PC-9 (cell line): ENCODE measurements at regions of chr1 and their contacts with region 1.

Region 1: DNA sequence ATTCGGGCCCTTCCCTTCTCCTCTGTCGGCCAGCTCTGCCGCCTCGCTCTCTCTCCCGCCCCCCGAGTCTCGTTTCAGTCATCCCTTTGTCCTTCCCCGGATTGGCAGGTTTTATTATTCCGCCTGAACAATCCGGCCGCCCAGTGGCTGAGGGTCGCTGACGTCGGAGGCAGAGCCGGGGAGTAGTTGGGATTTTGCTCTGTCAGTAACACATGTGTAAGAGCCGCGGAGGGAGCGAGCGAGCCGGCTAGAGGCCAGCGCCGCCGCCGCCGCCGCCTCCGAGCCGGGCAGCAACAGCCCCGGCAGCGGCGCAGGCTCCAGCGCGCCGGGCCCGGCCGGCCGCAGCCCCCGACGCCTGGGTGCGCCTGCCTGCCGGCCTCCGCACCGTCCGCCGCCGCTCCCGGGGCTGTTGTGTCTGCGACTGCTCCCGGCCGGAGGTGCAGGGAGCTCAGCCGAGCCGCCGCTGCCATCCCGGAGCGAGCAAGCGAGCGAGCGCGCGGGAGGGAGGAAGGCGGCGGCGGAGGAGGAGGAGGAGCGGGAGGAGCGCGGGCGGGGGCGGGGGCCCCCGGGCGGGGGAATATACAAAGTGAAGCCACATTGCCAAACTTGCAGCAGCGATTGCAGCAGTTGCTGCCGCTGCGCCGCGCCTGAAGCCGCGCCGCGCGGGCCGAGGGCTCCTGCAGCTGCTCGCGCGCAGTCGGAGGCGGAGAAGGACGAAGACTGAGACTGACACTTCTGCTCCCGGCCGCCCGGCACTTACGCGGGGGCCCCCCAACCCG is at the start of gene LMO4:
- DNase-seq: peak; percentile 93 to 94
- H3K4me3 ChIP-seq: peak within 1 kb of the TSS; percentile 96
- H3K27ac ChIP-seq: peak within 1 kb of the TSS; percentile 96
- H3K4me1 ChIP-seq: peaks cover 27% of the 10 kb centered on the region
- H3K27me3 ChIP-seq: no peaks in the 10 kb centered on the region
- CTCF ChIP-seq: no peak
- total RNA-seq, gene LMO4: 37.1 and 47.7 TPM in 2 replicates

Region 2: GRCh38 chr1:87017998-87018672 is 310.3 kb before region 1 on chr1:
- CTCF ChIA-PET with region 1: no interaction called
- POLR2A ChIA-PET with region 1: no interaction called
- intact Hi-C with region 1: no loop called
- DNase-seq: no peak
- H3K4me3 ChIP-seq: no peak overlapping the region
- H3K27ac ChIP-seq: no peak overlapping the region
- H3K4me1 ChIP-seq: no peaks in the 10 kb centered on the region
- H3K27me3 ChIP-seq: no peaks in the 10 kb centered on the region
- CTCF ChIP-seq: no peak

Region 3: GRCh38 chr1:87131809-87132283 is 196.6 kb before region 1 on chr1:
- CTCF ChIA-PET with region 1: no interaction called
- POLR2A ChIA-PET with region 1: no interaction called
- intact Hi-C with region 1: loop called (anchors 2 kb)
- DNase-seq: peak; percentile 55 to 69
- H3K4me3 ChIP-seq: peak overlapping the region; percentile 46; the same call in 1 of the 2 replicates
- H3K27ac ChIP-seq: no peak overlapping the region
- H3K4me1 ChIP-seq: 0 out of 2 replicates have a peak, but pooled peaks cover 12% of the 10 kb centered on the region
- H3K27me3 ChIP-seq: no peaks in the 10 kb centered on the region
- CTCF ChIP-seq: peak; percentile 97

Region 4: GRCh38 chr1:87226341-87226760 is 102.1 kb before region 1 on chr1:
- CTCF ChIA-PET with region 1: no interaction called
- POLR2A ChIA-PET with region 1: no interaction called
- intact Hi-C with region 1: loop called (anchors 1 kb)
- DNase-seq: peak; percentile 84 to 98
- H3K4me3 ChIP-seq: 0 out of 2 replicates have a peak overlapping the region, but pooled peaks have one; percentile 10
- H3K27ac ChIP-seq: peak overlapping the region; percentile 90
- H3K4me1 ChIP-seq: peaks cover 43% of the 10 kb centered on the region
- H3K27me3 ChIP-seq: no peaks in the 10 kb centered on the region
- CTCF ChIP-seq: no peak

Region 5: DNA sequence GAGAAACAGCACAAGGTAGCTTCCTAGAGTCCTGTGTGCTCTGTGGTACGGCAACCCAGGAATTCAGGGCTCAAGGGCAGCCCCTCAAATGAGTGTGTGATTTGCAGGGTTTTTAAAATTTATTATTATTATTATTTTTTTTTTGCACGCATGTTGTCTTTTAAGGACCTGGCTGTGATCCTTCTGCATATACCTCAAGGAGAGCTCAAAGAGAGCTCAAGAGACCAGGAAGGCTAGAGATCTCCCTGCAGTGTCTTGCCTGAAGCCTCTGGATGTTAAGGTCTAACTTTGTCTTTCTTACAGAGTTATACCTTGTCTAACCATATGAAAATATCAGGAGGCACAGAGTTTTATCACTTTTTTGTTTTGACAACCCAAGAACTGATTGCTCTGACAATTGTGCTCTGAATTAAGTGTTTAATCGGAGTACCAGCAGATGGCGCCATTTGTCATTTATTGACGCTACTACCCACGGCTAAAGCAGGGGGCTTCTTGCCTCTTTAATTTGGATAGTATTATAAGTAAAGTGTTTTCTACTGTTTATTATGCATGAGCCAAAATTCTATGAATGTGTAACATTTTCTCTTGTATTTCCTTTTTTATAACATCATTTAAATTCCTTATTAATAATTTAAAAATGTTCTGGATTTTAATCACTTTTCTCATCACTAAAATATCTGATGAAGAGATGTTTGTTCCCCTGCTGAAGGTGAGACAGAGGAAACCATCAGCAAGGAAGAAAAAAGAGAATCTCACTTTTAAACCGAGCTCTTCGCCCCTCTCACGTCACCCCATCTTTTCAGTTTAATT is 35.6 kb before region 1 on chr1:
- CTCF ChIA-PET with region 1: no interaction called
- POLR2A ChIA-PET with region 1: no interaction called
- intact Hi-C with region 1: no loop called
- DNase-seq: peak; percentile 42 to 48
- H3K4me3 ChIP-seq: no peak overlapping the region
- H3K27ac ChIP-seq: no peak overlapping the region
- H3K4me1 ChIP-seq: no peaks in the 10 kb centered on the region
- H3K27me3 ChIP-seq: no peaks in the 10 kb centered on the region
- CTCF ChIP-seq: peak; percentile 96

Region 6: GRCh38 chr1:87556326-87556725 is 227.9 kb after region 1 on chr1:
- CTCF ChIA-PET with region 1: no interaction called
- POLR2A ChIA-PET with region 1: no interaction called
- intact Hi-C with region 1: no loop called
- DNase-seq: no peak
- H3K4me3 ChIP-seq: no peak overlapping the region
- H3K27ac ChIP-seq: no peak overlapping the region
- H3K4me1 ChIP-seq: no peaks in the 10 kb centered on the region
- H3K27me3 ChIP-seq: no peaks in the 10 kb centered on the region
- CTCF ChIP-seq: no peak

Region 7: GRCh38 chr1:87805666-87806378 is 477.4 kb after region 1 on chr1:
- CTCF ChIA-PET with region 1: no interaction called
- POLR2A ChIA-PET with region 1: no interaction called
- intact Hi-C with region 1: loop called (anchors 5 kb)
- DNase-seq: peak; percentile 58 to 89
- H3K4me3 ChIP-seq: peak overlapping the region; percentile 27; the same call in 1 of the 2 replicates
- H3K27ac ChIP-seq: peak overlapping the region; percentile 29
- H3K4me1 ChIP-seq: peaks cover 22% of the 10 kb centered on the region
- H3K27me3 ChIP-seq: no peaks in the 10 kb centered on the region
- CTCF ChIP-seq: no peak

Region 8: DNA sequence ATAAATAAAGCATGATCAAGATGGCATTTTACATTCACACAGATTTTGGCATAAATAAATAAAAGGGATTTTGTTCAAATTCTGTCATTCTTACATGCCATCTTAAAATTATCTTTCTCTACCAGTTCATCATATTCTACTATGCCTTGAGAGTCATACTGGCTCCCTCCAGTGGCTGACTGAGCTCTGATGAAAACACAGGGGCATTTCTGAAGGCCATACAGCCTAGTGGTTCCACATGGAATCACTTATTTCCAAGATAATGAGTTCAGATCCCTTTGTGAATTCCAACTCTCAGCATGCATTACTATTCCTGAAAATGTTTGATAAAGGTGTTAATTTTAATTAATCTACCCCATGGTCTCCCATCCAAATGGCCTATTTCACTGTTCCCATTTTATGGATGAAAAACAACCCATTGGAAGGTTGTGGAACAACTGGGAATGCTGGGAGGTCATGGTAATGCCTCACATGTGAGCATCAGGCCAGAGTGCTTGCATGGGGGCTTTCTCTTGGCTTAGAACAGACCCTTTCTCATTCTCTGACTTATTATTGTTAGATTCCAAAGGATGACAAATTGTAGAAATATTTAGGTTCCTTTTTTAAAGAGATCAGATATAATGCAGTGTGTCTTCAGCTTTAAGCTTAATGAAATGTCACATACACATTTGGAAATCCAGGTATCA is 733.2 kb after region 1 on chr1:
- CTCF ChIA-PET with region 1: interaction called, 4 read pairs
- POLR2A ChIA-PET with region 1: interaction called, 11 read pairs
- intact Hi-C with region 1: loop called (anchors 2 kb)
- DNase-seq: peak; percentile 38 to 46
- H3K4me3 ChIP-seq: no peak overlapping the region
- H3K27ac ChIP-seq: no peak overlapping the region
- H3K4me1 ChIP-seq: no peaks in the 10 kb centered on the region
- H3K27me3 ChIP-seq: no peaks in the 10 kb centered on the region
- CTCF ChIP-seq: peak; percentile 78